B cell (primary cell): ENCODE measurements at regions of chr4 and their contacts with region 1.

Region 1: DNA sequence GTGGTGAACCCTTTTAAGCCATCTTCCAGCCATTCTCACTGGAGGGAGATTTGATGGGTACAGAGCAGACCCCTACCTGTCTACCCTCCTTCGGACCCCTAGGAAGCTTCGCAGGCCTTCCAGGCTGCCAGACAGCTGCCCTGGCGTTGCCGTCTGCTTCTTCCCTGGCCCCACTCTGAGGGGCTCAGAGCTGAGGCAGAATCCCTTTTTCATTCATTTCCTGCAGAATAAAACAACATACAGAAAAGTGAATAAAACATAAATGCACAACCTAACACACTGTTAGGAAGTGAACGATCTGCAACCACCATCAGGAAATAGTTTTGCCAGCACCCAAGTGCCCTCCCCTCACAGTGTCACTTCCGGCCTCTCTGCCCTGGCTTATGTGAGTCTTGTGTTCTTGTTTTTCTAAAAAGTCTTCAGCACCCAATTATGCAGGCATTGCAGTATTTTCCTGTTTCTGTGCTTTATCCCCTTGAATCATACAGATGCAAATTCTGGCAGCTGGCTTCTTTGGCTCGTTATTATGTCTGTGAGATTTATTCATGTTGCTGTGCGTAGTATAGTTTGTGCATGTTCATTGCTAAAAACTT is 5.6 kb upstream of the ADD1 start:
- DNase-seq: peak; percentile 81
- ATAC-seq: peak; percentile 58
- H3K4me3 ChIP-seq: peak overlapping the region in 4 of 5 experiments; percentile 18 to 51 (median 34)
- H3K4me3 Mint-ChIP-seq: peak overlapping the region; percentile 71
- H3K27ac ChIP-seq: peak overlapping the region; percentile 78
- H3K27ac Mint-ChIP-seq: peak overlapping the region; percentile 63
- H3K4me1 ChIP-seq: peaks cover 70 to 76% of the 10 kb centered on the region in 2 donors
- H3K4me1 Mint-ChIP-seq: peaks cover 72% of the 10 kb centered on the region
- H3K27me3 ChIP-seq: no peaks in the 10 kb centered on the region
- H3K27me3 Mint-ChIP-seq: no peaks in the 10 kb centered on the region
- CTCF ChIP-seq: no peak

Region 2: GRCh38 chr4:2787230-2788088 is 50.5 kb before region 1 on chr4:
- CTCF ChIA-PET with region 1: no interaction called
- POLR2A ChIA-PET with region 1: interaction called, 18 read pairs
- intact Hi-C with region 1: loop called (anchors 1 kb)
- DNase-seq: peak; percentile 90
- ATAC-seq: peak; percentile 52
- H3K4me3 ChIP-seq: peak overlapping the region in 2 of 5 experiments; percentile 10 to 20
- H3K4me3 Mint-ChIP-seq: peak overlapping the region; percentile 74
- H3K27ac ChIP-seq: peak overlapping the region; percentile 99
- H3K27ac Mint-ChIP-seq: peak overlapping the region; percentile 94
- H3K4me1 ChIP-seq: peaks cover 67 to 72% of the 10 kb centered on the region in 2 donors
- H3K4me1 Mint-ChIP-seq: peaks cover 70% of the 10 kb centered on the region
- H3K27me3 ChIP-seq: no peaks in the 10 kb centered on the region
- H3K27me3 Mint-ChIP-seq: no peaks in the 10 kb centered on the region
- CTCF ChIP-seq: no peak

Region 3: DNA sequence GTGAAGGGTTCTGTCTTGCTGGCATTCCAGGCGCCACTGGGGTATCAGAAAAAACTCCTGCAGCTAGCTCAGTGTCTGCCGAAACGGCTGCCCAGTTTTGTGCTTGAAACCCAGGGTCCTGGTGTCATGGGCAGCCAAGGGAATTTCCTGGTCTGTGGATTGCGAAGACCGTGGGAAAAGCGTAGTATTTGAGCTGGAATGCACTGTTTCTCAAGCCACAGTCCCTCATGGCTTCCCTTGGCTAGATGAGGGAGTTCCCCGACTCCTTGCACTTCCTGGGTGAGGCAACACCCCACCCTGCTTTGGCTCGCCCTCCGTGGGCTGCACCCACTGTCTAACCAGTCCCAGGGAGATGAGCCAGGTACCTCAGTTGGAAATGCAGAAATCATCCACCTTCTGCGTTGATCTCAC is 85.1 kb after region 1 on chr4:
- CTCF ChIA-PET with region 1: no interaction called
- POLR2A ChIA-PET with region 1: no interaction called
- intact Hi-C with region 1: loop called (anchors 1 kb)
- DNase-seq: no peak
- ATAC-seq: no peak
- H3K4me3 ChIP-seq: no peak overlapping the region
- H3K4me3 Mint-ChIP-seq: peak overlapping the region; percentile 46
- H3K27ac ChIP-seq: peak overlapping the region; percentile 6 to 49
- H3K27ac Mint-ChIP-seq: peak overlapping the region; percentile 79
- H3K4me1 ChIP-seq: peaks cover 23 to 33% of the 10 kb centered on the region in 2 donors
- H3K4me1 Mint-ChIP-seq: peaks cover 56% of the 10 kb centered on the region
- H3K27me3 ChIP-seq: no peaks in the 10 kb centered on the region
- H3K27me3 Mint-ChIP-seq: no peaks in the 10 kb centered on the region
- CTCF ChIP-seq: no peak

Region 4: GRCh38 chr4:3106339-3107186 is 268.6 kb after region 1 on chr4:
- CTCF ChIA-PET with region 1: no interaction called
- POLR2A ChIA-PET with region 1: no interaction called
- intact Hi-C with region 1: no loop called
- DNase-seq: peak; percentile 86
- ATAC-seq: peak; percentile 99
- H3K4me3 ChIP-seq: no peak overlapping the region
- H3K4me3 Mint-ChIP-seq: no peak overlapping the region
- H3K27ac ChIP-seq: no peak overlapping the region
- H3K27ac Mint-ChIP-seq: peak overlapping the region; percentile 82
- H3K4me1 ChIP-seq: peaks cover 0 to 6% of the 10 kb centered on the region in 2 donors
- H3K4me1 Mint-ChIP-seq: peaks cover 8% of the 10 kb centered on the region
- H3K27me3 ChIP-seq: no peaks in the 10 kb centered on the region
- H3K27me3 Mint-ChIP-seq: no peaks in the 10 kb centered on the region
- CTCF ChIP-seq: peak; percentile 96

Region 5: GRCh38 chr4:3160438-3160837 is 322.4 kb after region 1 on chr4:
- CTCF ChIA-PET with region 1: no interaction called
- POLR2A ChIA-PET with region 1: no interaction called
- intact Hi-C with region 1: no loop called
- DNase-seq: no peak
- ATAC-seq: no peak
- H3K4me3 ChIP-seq: no peak overlapping the region
- H3K4me3 Mint-ChIP-seq: no peak overlapping the region
- H3K27ac ChIP-seq: no peak overlapping the region
- H3K27ac Mint-ChIP-seq: no peak overlapping the region
- H3K4me1 ChIP-seq: no peaks in the 10 kb centered on the region
- H3K4me1 Mint-ChIP-seq: peaks cover 4% of the 10 kb centered on the region
- H3K27me3 ChIP-seq: no peaks in the 10 kb centered on the region
- H3K27me3 Mint-ChIP-seq: no peaks in the 10 kb centered on the region
- CTCF ChIP-seq: no peak